ENCODE measurements at regions of chr1 and their contacts with region 1.

Region 1: GRCh38 chr1:162612606-162613400 is 19.5 kb upstream of the DDR2 start:
- DNase-seq: peak; percentile 63 to 88 (median 77)
- ATAC-seq: peak; percentile 80 to 92
- H3K4me3 ChIP-seq: no peak overlapping the region
- H3K27ac ChIP-seq: peak overlapping the region; percentile 33
- H3K4me1 ChIP-seq: no peaks in the 10 kb centered on the region
- H3K27me3 ChIP-seq: no peaks in the 10 kb centered on the region

Region 2: DNA sequence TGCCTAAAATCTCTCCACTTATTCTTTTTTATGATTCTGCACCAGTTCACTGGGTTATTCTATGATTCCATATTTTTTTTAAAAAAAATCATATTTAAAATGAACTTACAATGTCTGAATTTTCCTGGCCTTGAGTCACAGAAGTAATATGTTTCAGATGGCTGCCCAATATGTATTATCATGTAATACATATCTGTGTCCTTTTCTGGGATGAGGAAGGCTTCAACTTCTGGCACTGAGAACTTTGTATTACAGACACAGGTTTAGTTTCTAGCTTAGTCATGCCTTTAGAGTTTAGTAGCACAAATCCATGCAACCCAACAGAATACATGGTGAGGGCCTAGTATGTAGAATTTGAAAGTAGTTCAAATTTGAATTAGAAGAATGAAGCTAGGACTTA is 169.9 kb after region 1 on chr1:
- intact Hi-C with region 1: loop called in 1 of 4 experiments (anchors 10 kb)
- DNase-seq: no peak
- ATAC-seq: no peak
- H3K4me3 ChIP-seq: no peak overlapping the region
- H3K27ac ChIP-seq: no peak overlapping the region
- H3K4me1 ChIP-seq: peaks cover 3% of the 10 kb centered on the region
- H3K27me3 ChIP-seq: no peaks in the 10 kb centered on the region

Measured in right cardiac atrium (tissue), 5 donors.